ENCODE measurements at regions of chr3 and their contacts with region 1.

Region 1: DNA sequence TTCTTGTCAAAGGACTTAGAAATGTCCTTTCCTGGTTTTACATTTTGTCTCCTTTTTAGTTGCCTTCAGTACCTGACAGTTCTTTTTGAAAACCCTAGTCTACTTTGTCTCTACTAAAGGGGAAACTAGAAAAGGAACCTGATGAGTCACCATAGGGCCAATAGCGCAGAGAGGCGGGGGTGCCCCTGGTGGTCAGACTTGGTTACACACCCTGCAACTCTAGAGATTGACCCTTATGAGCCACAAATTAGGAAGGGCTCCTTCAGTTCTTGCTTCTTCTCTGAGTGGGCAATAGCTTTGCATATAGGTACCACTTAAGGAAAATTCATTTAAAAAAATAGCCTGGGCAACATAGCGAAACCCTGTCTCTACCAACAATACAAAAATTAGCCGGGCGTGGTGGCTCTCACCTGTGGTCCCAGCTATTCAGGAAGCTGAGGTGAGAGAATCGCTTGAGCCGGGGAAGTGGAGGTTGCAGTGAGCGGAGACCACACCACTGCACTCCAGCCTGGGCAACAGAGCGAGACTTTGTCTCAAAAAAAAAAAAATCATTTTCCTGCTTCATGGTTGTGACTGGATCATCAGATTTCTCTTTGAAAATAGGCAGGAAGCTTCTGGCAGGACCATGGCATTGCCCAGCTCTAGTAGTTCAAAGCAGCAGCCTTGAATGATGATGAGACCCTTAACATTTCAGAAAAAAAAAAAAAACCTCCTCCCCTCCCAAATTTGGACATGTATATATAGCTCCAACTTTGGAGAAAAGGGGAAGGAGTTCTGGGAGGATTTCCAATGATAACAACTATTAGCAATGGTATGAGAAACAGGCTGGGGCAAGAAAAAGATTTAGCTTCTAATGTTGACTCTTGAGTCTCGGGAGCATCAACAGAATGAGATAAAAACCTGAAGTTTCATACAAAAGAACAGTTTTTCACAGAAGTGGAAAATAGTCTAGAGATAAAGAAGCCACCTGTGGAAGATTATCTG is 45.2 kb upstream of the RASA2 start:
- DNase-seq: peak; percentile 63 to 85 (median 75)
- ATAC-seq: peak; percentile 100
- H3K4me3 ChIP-seq: no peak overlapping the region
- H3K4me3 Mint-ChIP-seq: peak overlapping the region; percentile 39
- H3K27ac ChIP-seq: peak overlapping the region in 1 of 2 experiments; percentile 64
- H3K27ac Mint-ChIP-seq: peak overlapping the region; percentile 83
- H3K4me1 ChIP-seq: peaks cover 9% of the 10 kb centered on the region
- H3K4me1 Mint-ChIP-seq: peaks cover 38% of the 10 kb centered on the region
- H3K27me3 ChIP-seq: no peaks in the 10 kb centered on the region
- H3K27me3 Mint-ChIP-seq: no peaks in the 10 kb centered on the region
- CTCF ChIP-seq: peak; percentile 88

Region 2: DNA sequence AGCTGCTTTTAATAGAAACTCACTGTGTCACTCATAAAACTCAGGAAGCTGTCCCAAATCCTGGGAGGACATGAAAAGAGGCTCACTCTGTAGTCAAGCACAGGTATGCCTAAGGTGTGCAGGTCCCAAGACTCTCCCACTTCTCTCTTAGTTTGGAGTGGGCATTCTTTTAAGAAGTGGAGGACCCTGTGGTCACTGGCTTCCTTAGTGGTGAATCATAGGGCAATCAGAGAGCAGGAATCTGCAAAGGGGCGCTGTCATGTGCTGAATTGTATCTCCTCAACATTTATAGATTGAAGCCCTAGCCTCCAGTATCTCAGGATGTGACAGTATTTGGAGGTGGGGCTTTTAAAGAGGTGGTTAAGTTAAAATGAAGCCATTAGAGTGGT is 120.6 kb before region 1 on chr3:
- CTCF ChIA-PET with region 1: interaction called, 14 read pairs
- POLR2A ChIA-PET with region 1: no interaction called
- intact Hi-C with region 1: no loop called
- DNase-seq: peak in 1 of 9 experiments; percentile 50
- ATAC-seq: peak; percentile 29
- H3K4me3 ChIP-seq: no peak overlapping the region
- H3K4me3 Mint-ChIP-seq: peak overlapping the region; percentile 54
- H3K27ac ChIP-seq: peak overlapping the region in 1 of 2 experiments; percentile 34
- H3K27ac Mint-ChIP-seq: peak overlapping the region; percentile 89
- H3K4me1 ChIP-seq: peaks cover 24% of the 10 kb centered on the region
- H3K4me1 Mint-ChIP-seq: peaks cover 33% of the 10 kb centered on the region
- H3K27me3 ChIP-seq: no peaks in the 10 kb centered on the region
- H3K27me3 Mint-ChIP-seq: no peaks in the 10 kb centered on the region
- CTCF ChIP-seq: no peak

Region 3: GRCh38 chr3:141402476-141403171 is 39.0 kb before region 1 on chr3:
- CTCF ChIA-PET with region 1: interaction called, 30 read pairs
- POLR2A ChIA-PET with region 1: interaction called, 3 read pairs
- intact Hi-C with region 1: loop called (anchors 1 to 5 kb)
- DNase-seq: peak; percentile 15 to 80 (median 56)
- ATAC-seq: peak; percentile 67
- H3K4me3 ChIP-seq: peak overlapping the region; percentile 70 to 85
- H3K4me3 Mint-ChIP-seq: peak overlapping the region; percentile 96
- H3K27ac ChIP-seq: peak overlapping the region; percentile 81 to 88
- H3K27ac Mint-ChIP-seq: peak overlapping the region; percentile 97
- H3K4me1 ChIP-seq: peaks cover 25% of the 10 kb centered on the region
- H3K4me1 Mint-ChIP-seq: peaks cover 70% of the 10 kb centered on the region
- H3K27me3 ChIP-seq: no peaks in the 10 kb centered on the region
- H3K27me3 Mint-ChIP-seq: no peaks in the 10 kb centered on the region
- CTCF ChIP-seq: no peak

Region 4: GRCh38 chr3:141426404-141427034 is 15.2 kb before region 1 on chr3:
- CTCF ChIA-PET with region 1: interaction called, 16 read pairs
- POLR2A ChIA-PET with region 1: interaction called, 3 read pairs
- intact Hi-C with region 1: no loop called
- DNase-seq: no peak
- ATAC-seq: no peak
- H3K4me3 ChIP-seq: no peak overlapping the region
- H3K4me3 Mint-ChIP-seq: no peak overlapping the region
- H3K27ac ChIP-seq: no peak overlapping the region
- H3K27ac Mint-ChIP-seq: no peak overlapping the region
- H3K4me1 ChIP-seq: no peaks in the 10 kb centered on the region
- H3K4me1 Mint-ChIP-seq: peaks cover 37% of the 10 kb centered on the region
- H3K27me3 ChIP-seq: no peaks in the 10 kb centered on the region
- H3K27me3 Mint-ChIP-seq: no peaks in the 10 kb centered on the region
- CTCF ChIP-seq: no peak